ENCODE measurements at regions of chr11 and their contacts with region 1.

Region 1: DNA sequence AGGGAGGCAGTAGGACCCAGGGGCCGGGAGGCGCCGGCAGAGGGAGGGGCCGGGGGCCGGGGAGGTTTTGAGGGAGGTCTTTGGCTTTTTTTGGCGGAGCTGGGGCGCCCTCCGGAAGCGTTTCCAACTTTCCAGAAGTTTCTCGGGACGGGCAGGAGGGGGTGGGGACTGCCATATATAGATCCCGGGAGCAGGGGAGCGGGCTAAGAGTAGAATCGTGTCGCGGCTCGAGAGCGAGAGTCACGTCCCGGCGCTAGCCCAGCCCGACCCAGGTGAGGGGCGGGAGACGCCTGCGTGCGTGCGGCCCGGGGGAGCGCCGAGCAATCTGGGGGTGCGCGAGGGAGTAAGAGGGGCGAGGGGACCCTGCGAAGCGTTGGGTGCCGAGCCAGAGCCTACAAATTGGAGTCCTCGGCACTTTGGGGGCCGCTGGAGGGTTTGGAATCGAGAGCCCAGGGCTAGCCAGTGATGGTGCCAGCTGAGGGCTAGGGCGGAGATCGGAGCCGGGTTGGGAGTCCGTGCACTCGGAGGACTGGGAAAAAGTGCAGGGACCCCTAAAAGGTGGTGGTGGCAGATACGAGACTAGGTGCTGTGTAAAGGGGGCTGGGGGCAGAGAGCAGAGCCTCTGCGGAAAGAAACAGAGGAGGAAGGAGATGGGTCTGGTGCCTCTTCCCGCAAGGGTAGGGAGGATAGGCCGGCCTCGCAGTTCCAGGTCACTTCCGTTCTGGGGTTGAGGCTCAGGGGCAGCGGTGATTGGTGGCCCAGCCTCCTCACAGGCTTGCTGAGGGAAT is at the start of gene SERPINH1:
- DNase-seq: no peak
- H3K4me3 ChIP-seq: peak within 1 kb of the TSS; percentile 91
- CTCF ChIP-seq: peak; percentile 0

Region 2: DNA sequence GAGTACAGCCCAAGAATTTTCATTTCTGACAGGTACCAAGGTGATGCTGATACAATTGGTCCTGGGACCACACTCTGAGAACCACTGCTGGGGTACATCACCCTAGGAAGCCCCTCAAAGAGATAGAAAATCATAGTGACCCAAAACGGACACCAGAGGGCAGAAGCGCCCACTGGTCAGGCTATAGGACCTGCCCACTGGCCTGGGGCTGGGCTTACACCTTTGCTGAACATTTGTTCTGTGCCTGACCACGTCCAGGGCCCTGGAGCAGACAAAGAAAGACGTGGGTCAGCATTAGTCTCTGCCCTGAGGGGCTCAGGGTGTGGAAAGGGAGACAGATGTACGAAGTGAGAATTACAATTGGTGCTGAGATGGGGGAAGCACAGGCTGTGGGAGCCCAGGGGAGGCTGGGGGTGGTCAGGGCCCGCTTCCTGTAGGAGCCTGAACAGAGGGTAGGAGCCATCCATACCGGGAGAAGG is 14.6 kb before region 1 on chr11:
- CTCF ChIA-PET with region 1: interaction called, 21 read pairs
- POLR2A ChIA-PET with region 1: interaction called, 168 read pairs
- DNase-seq: no peak
- H3K4me3 ChIP-seq: no peak overlapping the region
- CTCF ChIP-seq: peak; percentile 72

Region 3: DNA sequence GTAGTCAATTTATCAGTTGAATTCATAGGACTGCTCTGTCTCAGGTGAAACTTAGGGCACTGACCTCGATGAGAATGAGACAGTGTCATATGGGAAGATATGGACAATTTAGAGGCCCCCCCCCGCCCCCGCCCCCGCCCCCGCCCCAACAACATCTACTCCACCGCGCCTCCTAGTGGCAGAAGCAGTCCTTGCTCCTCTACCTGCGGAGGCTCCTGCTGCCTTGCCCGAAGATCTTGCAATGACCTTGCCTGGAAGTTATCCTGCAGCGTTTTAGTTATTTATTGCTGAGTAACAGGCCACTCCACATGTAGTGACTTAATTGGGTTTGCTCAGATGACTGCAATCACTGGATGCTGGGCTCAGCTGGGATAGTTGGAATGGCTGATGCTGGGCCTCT is 15.0 kb after region 1 on chr11:
- CTCF ChIA-PET with region 1: interaction called, 96 read pairs
- POLR2A ChIA-PET with region 1: interaction called, 79 read pairs
- DNase-seq: no peak
- H3K4me3 ChIP-seq: no peak overlapping the region
- CTCF ChIP-seq: peak; percentile 68

Region 4: DNA sequence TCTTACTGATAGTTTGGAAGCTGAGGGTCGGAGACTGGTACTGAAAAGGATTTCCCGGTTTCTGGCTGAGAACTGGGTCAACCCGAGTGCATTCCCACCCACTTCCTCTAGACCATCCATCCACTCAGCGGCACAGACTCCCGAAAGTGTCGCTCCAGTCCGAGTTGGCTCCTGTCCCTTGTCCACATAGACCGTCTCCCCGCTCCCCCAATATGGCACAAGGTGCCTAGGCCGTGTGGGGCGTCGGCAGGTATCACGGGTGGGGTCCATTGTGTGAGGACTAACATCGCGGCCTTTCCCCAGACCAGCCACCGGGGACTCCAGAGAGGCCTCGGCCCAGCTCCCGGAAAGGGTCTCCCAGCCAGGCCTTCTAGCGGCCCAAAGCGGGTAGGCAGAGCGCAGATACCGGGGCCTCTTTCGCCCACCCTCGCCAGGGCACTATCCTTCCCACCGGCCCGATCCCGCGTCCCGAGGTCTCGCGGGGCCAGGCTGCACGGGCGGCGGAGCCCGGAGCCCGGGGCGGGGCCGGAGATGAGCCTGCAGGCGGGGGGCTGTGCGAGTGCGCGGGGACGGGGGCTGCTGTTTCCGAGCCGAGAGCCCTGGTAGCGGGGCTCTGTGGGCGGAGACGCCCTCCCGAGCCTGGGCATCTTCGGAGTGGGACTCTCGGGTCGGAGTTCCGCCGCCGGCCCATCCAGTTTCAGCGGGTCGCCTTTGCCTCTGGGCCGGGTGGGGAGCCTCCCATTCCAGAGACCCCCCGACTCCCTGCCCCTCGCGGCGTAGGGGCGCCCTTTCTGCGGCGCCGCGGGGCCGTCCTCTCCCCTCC is 20.9 kb after region 1 on chr11:
- CTCF ChIA-PET with region 1: interaction called, 96 read pairs
- POLR2A ChIA-PET with region 1: interaction called, 79 read pairs
- DNase-seq: no peak
- H3K4me3 ChIP-seq: peak overlapping the region; percentile 54
- CTCF ChIP-seq: peak; percentile 26

Measured in AG04449 (cell line).